ENCODE measurements at regions of chr20 and their contacts with region 1.

Region 1: GRCh38 chr20:62652051-62652926 is 10.0 kb downstream of the SLCO4A1 start:
- DNase-seq: peak; percentile 98
- H3K4me3 ChIP-seq: peak overlapping the region; percentile 37 to 49 (median 44)
- H3K27ac ChIP-seq: peak overlapping the region; percentile 93 to 94 (median 94)
- H3K4me1 ChIP-seq: peaks cover 47 to 59% (median 53%) of the 10 kb centered on the region in 4 donors
- H3K27me3 ChIP-seq: no peaks in the 10 kb centered on the region
- CTCF ChIP-seq: peak in 1 of 3 experiments; percentile 12
- EP300 ChIP-seq: peak; percentile 90
- POLR2A ChIP-seq: no peak

Region 2: DNA sequence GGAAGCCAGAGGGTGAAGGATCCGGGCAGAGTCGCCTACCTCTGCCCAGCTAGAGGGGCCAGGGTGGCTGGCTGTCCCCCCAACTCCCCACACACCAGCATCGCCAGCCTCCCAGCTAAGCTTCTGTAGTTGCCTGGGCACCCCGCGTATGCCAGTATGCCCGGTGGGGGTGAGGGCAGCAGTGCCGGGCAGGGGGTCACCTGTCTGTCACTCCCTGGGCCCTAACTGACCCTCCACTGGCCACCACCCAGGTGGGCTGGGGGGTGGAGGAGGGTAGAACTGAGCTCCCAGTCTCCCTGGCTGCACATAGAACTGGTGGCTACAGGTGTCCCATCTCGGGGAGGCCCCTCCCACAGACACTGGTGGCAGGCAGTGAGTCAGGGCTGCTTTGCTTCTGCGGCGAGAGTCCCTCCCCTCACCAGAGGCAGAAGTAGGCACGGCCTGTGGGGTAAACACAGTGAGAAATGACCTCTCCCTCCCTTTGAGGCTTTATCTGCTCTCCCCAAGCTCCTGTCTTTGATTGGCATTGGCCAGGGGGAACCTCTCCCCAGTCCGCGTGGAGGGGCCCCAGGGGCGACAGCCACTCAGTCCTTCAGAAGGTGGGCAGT is 58.7 kb after region 1 on chr20:
- intact Hi-C with region 1: no loop called
- DNase-seq: no peak
- H3K4me3 ChIP-seq: no peak overlapping the region
- H3K27ac ChIP-seq: no peak overlapping the region
- H3K4me1 ChIP-seq: peaks cover 13 to 57% (median 43%) of the 10 kb centered on the region in 4 donors
- H3K27me3 ChIP-seq: peaks cover 2 to 58% (median 34%) of the 10 kb centered on the region in 4 donors
- CTCF ChIP-seq: no peak
- EP300 ChIP-seq: no peak
- POLR2A ChIP-seq: no peak

Region 3: GRCh38 chr20:62937366-62938104 is 285.2 kb after region 1 on chr20:
- intact Hi-C with region 1: loop called (anchors 10 kb)
- DNase-seq: peak; percentile 99
- H3K4me3 ChIP-seq: peak overlapping the region; percentile 88 to 91 (median 90)
- H3K27ac ChIP-seq: peak overlapping the region; percentile 91 to 98 (median 94)
- H3K4me1 ChIP-seq: peaks cover 45 to 84% (median 75%) of the 10 kb centered on the region in 4 donors
- H3K27me3 ChIP-seq: no peaks in the 10 kb centered on the region
- CTCF ChIP-seq: no peak
- EP300 ChIP-seq: no peak
- POLR2A ChIP-seq: peak; percentile 33